ENCODE measurements at regions of chr6 and their contacts with region 1.

Region 1: GRCh38 chr6:30212865-30213666 is at the start of gene TRIM26:
- DNase-seq: peak; percentile 98
- total RNA-seq, gene TRIM26: 24.2 TPM

Region 2: DNA sequence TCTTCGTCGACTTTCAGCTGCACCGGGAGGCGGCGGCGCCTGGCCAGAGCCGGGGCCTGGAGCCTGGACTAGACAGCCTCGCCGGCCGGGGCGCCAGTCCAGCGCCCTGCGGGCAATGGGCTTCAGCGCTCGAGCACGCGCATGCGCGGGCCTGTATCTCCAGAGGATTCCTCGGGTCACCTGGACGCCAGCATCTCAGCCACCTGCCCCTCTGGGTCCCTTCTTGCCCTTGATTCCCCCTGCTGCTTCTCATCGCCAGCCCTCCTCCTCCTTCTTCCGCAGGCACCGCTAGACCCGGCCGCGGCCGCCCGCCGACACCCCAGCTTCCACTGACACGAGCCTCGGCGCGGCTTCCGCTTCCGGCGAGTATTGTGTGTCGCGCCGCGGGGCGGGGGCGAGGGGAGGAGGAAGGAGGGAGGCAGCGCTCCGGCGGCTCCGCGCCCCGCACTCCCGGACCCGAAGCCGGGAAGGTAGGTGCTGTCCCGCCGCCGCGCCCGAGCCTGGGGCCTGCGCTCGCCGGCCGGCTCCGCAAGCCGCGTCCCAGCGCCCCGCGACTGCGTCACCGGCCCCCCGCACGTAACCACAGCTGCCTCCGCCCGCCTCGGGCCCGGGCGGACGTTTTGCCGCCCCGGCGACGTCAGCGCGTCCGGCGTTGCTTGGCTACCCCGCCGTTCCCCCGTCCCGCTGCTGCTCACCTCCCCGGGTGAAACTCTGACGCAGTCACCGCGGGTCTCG is 113.6 kb after region 1 on chr6 and contains the start of gene TRIM39:
- intact Hi-C with region 1: loop called (anchors 5 kb)
- DNase-seq: peak; percentile 95
- total RNA-seq, gene TRIM39: 10.3 TPM

Measured in cardiac septum (tissue), 1 donor.